Activated CD4-positive, alpha-beta T cell treated with anti-CD3 and anti-CD28 coated beads, Interleukin-2, amount 10 ng/mL, durations not matched to agents 7 days and 5 days (primary cell): ENCODE measurements at regions of chr3 and their contacts with region 1.

Region 1: GRCh38 chr3:50260027-50260941 is 8.7 kb upstream of the SEMA3B start:
- DNase-seq: peak; percentile 82
- H3K4me3 Mint-ChIP-seq: peak overlapping the region; percentile 51
- H3K27ac Mint-ChIP-seq: peak overlapping the region; percentile 46
- H3K4me1 Mint-ChIP-seq: peaks cover 7% of the 10 kb centered on the region
- H3K27me3 Mint-ChIP-seq: no peaks in the 10 kb centered on the region

Region 2: DNA sequence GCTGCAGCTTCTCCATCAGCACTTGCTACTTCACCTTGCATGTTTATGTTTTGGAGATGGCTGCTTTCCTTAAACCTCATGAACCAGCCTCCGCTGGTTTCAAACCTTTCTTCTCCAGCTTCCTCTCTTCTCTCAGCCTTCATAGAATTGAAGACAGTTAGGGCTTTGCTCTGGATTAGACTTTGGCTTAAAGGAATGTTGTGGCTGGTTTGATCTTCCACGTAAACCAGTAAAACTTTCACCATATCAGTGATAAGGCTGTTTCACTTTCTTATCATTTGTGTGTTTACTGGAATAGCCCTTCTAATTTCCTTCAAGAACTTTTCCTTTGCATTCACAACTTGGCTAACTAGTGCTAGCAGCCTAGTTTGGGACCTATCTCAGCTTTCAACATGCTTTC is 80.6 kb before region 1 on chr3:
- CTCF ChIA-PET with region 1: no interaction called
- POLR2A ChIA-PET with region 1: no interaction called
- DNase-seq: no peak
- H3K4me3 Mint-ChIP-seq: no peak overlapping the region
- H3K27ac Mint-ChIP-seq: no peak overlapping the region
- H3K4me1 Mint-ChIP-seq: no peaks in the 10 kb centered on the region
- H3K27me3 Mint-ChIP-seq: peaks cover 3% of the 10 kb centered on the region

Region 3: GRCh38 chr3:50245831-50246516 is 14.3 kb before region 1 on chr3:
- CTCF ChIA-PET with region 1: interaction called, 143 read pairs
- POLR2A ChIA-PET with region 1: interaction called, 3 read pairs
- DNase-seq: peak; percentile 95
- H3K4me3 Mint-ChIP-seq: peak overlapping the region; percentile 75
- H3K27ac Mint-ChIP-seq: peak overlapping the region; percentile 93
- H3K4me1 Mint-ChIP-seq: peaks cover 74% of the 10 kb centered on the region
- H3K27me3 Mint-ChIP-seq: no peaks in the 10 kb centered on the region

Region 4: DNA sequence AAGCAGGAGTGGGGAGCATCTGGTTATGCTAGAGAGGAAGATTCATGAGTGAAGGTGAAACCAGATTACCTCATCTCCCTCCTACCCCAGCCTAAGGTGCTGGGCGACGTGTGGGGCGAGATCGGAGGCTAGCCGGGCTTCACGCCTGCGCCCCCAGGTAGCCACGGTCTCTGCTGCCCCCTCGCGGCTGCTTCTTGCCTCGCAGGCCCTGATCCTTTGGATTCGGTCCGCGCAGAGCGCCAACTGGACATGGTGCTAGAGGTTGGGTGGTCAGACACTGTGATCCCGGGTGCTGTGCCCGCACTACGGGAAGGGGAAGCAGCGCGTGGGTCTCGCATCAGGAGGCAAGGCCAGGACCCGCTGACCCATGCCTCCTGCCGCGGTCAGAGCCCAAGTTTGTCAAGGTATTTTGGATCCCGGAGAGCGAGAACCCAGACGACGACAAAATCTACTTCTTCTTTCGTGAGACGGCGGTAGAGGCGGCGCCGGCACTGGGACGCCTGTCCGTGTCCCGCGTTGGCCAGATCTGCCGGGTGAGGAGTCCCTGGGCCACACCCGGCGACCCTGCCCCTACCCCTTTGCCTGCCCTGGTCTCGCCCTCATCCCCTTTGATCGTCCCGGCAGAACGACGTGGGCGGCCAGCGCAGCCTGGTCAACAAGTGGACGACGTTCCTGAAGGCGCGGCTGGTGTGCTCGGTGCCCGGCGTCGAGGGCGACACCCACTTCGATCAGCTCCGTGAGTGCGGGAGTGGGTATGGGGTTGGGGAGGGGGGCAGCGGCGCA is 12.8 kb after region 1 on chr3:
- CTCF ChIA-PET with region 1: interaction called, 11 read pairs
- POLR2A ChIA-PET with region 1: no interaction called
- DNase-seq: peak; percentile 87
- H3K4me3 Mint-ChIP-seq: peak overlapping the region; percentile 54
- H3K27ac Mint-ChIP-seq: peak overlapping the region; percentile 26
- H3K4me1 Mint-ChIP-seq: peaks cover 35% of the 10 kb centered on the region
- H3K27me3 Mint-ChIP-seq: peaks cover 44% of the 10 kb centered on the region